ENCODE measurements at regions of chr1 and their contacts with region 1.

Region 1: GRCh38 chr1:92310185-92310597 is 11.3 kb downstream of the RPAP2 start:
- DNase-seq: no peak
- ATAC-seq: peak; percentile 51
- H3K4me3 Mint-ChIP-seq: no peak overlapping the region
- H3K27ac Mint-ChIP-seq: no peak overlapping the region
- H3K4me1 Mint-ChIP-seq: peaks cover 38% of the 10 kb centered on the region
- H3K27me3 Mint-ChIP-seq: no peaks in the 10 kb centered on the region

Region 2: DNA sequence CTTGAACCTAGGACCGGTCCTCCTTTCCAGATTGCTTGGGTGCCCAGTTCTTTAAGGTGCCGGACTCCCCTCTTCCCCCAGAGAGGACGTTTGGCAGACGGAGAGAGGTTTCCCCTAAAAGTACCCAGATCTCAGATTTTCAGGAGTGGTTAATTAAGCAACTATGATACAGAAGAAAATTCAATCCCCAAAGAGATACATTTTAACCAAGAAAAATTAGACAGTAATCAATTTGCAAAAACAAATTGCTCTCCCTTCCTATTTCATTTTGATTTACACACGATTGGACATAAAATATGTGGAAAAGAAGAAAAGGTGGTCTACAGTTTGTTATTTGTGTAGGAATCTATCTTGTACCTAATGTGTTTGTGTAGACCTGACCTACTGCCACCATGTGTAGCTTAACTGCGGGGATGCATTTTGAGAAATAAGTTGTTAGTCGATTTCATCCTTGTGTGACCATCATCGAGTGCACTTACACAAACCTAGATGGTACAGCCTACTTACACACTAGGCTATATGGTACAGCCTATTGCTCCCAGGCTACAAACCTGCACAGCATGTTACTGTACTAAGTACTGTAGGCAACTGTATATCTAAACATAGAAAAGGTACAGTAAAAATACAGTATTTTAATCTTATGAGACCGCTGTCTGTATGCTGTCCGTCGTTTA is 10.6 kb before region 1 on chr1:
- CTCF ChIA-PET with region 1: interaction called, 14 read pairs
- POLR2A ChIA-PET with region 1: interaction called, 3 read pairs
- DNase-seq: no peak
- ATAC-seq: no peak
- H3K4me3 Mint-ChIP-seq: peak overlapping the region; percentile 94
- H3K27ac Mint-ChIP-seq: peak overlapping the region; percentile 98
- H3K4me1 Mint-ChIP-seq: peaks cover 40% of the 10 kb centered on the region
- H3K27me3 Mint-ChIP-seq: no peaks in the 10 kb centered on the region

Region 3: GRCh38 chr1:92367496-92367895 is 57.3 kb after region 1 on chr1:
- CTCF ChIA-PET with region 1: interaction called, 18 read pairs
- POLR2A ChIA-PET with region 1: interaction called, 12 read pairs
- DNase-seq: peak; percentile 50
- ATAC-seq: peak; percentile 59
- H3K4me3 Mint-ChIP-seq: peak overlapping the region; percentile 11
- H3K27ac Mint-ChIP-seq: peak overlapping the region; percentile 56
- H3K4me1 Mint-ChIP-seq: peaks cover 63% of the 10 kb centered on the region
- H3K27me3 Mint-ChIP-seq: no peaks in the 10 kb centered on the region

Region 4: DNA sequence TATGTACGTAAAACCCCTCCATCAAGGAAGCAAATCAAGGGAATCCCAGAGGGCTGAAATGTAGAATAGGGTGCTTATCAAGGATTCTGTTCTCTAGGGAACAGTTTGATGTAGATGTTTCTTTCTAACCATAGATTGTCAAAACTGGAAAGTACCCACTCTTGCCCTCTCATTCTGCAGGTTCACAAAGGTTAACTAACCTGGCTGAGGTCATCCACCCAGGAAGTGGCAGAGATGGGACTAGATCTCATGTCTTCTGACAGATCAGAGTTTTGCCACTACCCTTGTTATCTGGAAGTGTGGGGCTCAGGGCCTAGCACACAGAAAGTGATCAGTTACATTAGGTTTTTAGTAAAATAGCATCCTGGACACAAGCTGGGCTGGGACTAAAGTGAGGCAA is 129.1 kb after region 1 on chr1:
- CTCF ChIA-PET with region 1: no interaction called
- POLR2A ChIA-PET with region 1: no interaction called
- DNase-seq: peak; percentile 28
- ATAC-seq: no peak
- H3K4me3 Mint-ChIP-seq: no peak overlapping the region
- H3K27ac Mint-ChIP-seq: no peak overlapping the region
- H3K4me1 Mint-ChIP-seq: peaks cover 21% of the 10 kb centered on the region
- H3K27me3 Mint-ChIP-seq: no peaks in the 10 kb centered on the region

Region 5: DNA sequence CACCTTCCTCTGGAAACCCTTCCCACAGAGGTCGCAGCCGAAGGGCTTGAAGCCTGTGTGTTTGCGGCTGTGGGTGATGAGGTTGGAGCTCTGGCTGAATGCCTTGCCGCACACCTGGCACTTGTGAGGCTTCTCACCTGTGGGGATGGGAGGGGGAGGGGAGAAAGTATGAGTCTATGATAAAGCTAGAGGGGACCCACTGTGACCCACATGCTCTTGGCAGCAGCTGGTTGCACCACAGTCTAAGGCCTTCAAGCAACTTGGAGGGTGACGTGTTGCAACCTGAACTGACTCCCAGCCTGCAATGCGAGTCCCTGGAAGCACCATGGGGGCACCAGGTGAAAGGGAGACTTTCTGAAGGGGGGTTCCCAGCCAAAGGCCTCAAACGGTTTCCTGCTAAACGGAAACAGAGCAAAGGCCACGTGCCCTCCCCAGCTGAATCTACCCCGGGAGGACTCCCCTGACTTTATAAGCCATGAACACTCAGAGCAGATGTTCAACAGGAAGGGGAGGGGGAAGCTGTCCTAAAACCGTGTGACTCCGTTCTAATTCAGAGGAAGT is 166.0 kb after region 1 on chr1:
- CTCF ChIA-PET with region 1: interaction called, 122 read pairs
- POLR2A ChIA-PET with region 1: interaction called, 7 read pairs
- DNase-seq: peak; percentile 78
- ATAC-seq: peak; percentile 67
- H3K4me3 Mint-ChIP-seq: peak overlapping the region; percentile 16
- H3K27ac Mint-ChIP-seq: peak overlapping the region; percentile 79
- H3K4me1 Mint-ChIP-seq: peaks cover 84% of the 10 kb centered on the region
- H3K27me3 Mint-ChIP-seq: no peaks in the 10 kb centered on the region

Region 6: DNA sequence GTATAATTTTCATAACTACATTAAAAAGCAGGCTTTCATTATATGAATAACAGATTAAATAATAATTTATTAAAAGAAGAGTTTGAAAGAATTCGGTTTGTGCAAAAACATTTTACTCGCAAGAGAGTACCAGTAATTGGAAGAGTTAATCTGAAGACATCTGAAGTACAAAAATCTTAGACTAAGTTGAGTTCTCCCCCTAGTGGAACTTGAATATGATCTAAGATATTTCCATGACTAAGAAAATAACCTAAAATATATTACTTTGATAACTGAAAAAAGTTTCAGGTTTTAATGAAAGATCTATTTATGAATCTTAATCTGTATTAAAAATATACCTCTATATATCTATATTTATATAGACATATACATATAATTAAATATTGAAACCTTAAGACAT is 289.0 kb after region 1 on chr1:
- CTCF ChIA-PET with region 1: interaction called, 25 read pairs
- POLR2A ChIA-PET with region 1: interaction called, 3 read pairs
- DNase-seq: no peak
- ATAC-seq: peak; percentile 61
- H3K4me3 Mint-ChIP-seq: no peak overlapping the region
- H3K27ac Mint-ChIP-seq: no peak overlapping the region
- H3K4me1 Mint-ChIP-seq: peaks cover 25% of the 10 kb centered on the region
- H3K27me3 Mint-ChIP-seq: no peaks in the 10 kb centered on the region

Region 7: GRCh38 chr1:92623187-92623778 is 313.1 kb after region 1 on chr1:
- CTCF ChIA-PET with region 1: interaction called, 14 read pairs
- POLR2A ChIA-PET with region 1: no interaction called
- DNase-seq: no peak
- ATAC-seq: no peak
- H3K4me3 Mint-ChIP-seq: no peak overlapping the region
- H3K27ac Mint-ChIP-seq: no peak overlapping the region
- H3K4me1 Mint-ChIP-seq: no peaks in the 10 kb centered on the region
- H3K27me3 Mint-ChIP-seq: peaks cover 12% of the 10 kb centered on the region